CD4-positive, alpha-beta T cell (primary cell): ENCODE measurements at regions of chr21 and their contacts with region 1.

Region 1: GRCh38 chr21:37009740-37010341 is 3.3 kb downstream of the RIPPLY3 start:
- DNase-seq: peak; percentile 62 to 87 (median 74)
- ATAC-seq: peak; percentile 94
- H3K4me3 ChIP-seq: peak overlapping the region; percentile 13
- H3K4me3 Mint-ChIP-seq: peak overlapping the region; percentile 76
- H3K27ac ChIP-seq: no peak overlapping the region
- H3K27ac Mint-ChIP-seq: no peak overlapping the region
- H3K4me1 ChIP-seq: peaks cover 28% of the 10 kb centered on the region
- H3K4me1 Mint-ChIP-seq: peaks cover 15% of the 10 kb centered on the region
- H3K27me3 ChIP-seq: peaks cover 24 to 31% of the 10 kb centered on the region in 2 experiments
- H3K27me3 Mint-ChIP-seq: peaks cover 51% of the 10 kb centered on the region
- CTCF ChIP-seq: peak; percentile 88

Region 2: GRCh38 chr21:35664683-35665082 is 1345.2 kb before region 1 on chr21:
- CTCF ChIA-PET with region 1: no interaction called
- POLR2A ChIA-PET with region 1: no interaction called
- intact Hi-C with region 1: no loop called
- DNase-seq: no peak
- ATAC-seq: no peak
- H3K4me3 ChIP-seq: no peak overlapping the region
- H3K4me3 Mint-ChIP-seq: no peak overlapping the region
- H3K27ac ChIP-seq: no peak overlapping the region
- H3K27ac Mint-ChIP-seq: no peak overlapping the region
- H3K4me1 ChIP-seq: no peaks in the 10 kb centered on the region
- H3K4me1 Mint-ChIP-seq: no peaks in the 10 kb centered on the region
- H3K27me3 ChIP-seq: no peaks in the 10 kb centered on the region
- H3K27me3 Mint-ChIP-seq: peaks cover 5% of the 10 kb centered on the region
- CTCF ChIP-seq: no peak

Region 3: GRCh38 chr21:36504067-36505058 is 505.5 kb before region 1 on chr21:
- CTCF ChIA-PET with region 1: no interaction called
- POLR2A ChIA-PET with region 1: no interaction called
- intact Hi-C with region 1: loop called (anchors 1 to 10 kb)
- DNase-seq: peak in 10 of 14 experiments; percentile 5 to 74 (median 24)
- ATAC-seq: no peak
- H3K4me3 ChIP-seq: no peak overlapping the region
- H3K4me3 Mint-ChIP-seq: no peak overlapping the region
- H3K27ac ChIP-seq: no peak overlapping the region
- H3K27ac Mint-ChIP-seq: no peak overlapping the region
- H3K4me1 ChIP-seq: no peaks in the 10 kb centered on the region
- H3K4me1 Mint-ChIP-seq: no peaks in the 10 kb centered on the region
- H3K27me3 ChIP-seq: no peaks in the 10 kb centered on the region
- H3K27me3 Mint-ChIP-seq: peaks cover 4% of the 10 kb centered on the region
- CTCF ChIP-seq: peak; percentile 99

Region 4: DNA sequence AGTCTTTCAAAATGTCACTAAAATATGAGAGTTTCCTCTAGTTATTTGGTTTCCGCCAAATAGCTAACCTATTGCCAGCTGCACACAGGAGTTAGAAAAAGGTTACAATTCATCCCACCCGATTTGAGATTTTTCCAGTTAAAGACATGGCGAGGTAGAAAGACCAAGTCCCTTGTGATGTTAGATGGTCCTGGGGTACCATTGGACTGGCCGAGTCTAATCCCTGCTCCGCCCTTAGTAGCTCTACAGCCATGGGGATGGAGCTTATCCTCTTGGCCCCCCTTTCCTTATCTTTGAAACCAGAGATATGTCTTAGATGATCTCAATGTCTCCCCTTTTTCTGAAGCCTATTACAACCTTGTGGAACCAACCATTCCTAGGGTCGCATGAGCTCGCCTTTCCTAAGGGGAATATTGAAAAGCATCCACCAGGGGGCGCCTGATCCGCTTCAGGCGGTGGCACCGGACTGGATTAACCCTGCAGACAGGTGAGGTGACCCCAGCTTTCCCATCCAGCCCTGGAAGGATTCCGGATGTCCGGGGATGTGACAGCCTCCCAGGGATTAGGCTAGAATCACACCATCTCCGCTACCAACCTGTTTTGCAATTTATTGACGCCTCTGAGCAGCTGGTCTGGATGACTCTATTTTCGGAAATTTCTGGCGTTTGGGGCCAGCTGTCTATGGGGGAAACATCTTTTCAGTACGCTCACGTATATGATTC is 379.2 kb before region 1 on chr21:
- CTCF ChIA-PET with region 1: no interaction called
- POLR2A ChIA-PET with region 1: no interaction called
- intact Hi-C with region 1: loop called in 1 of 2 experiments (anchors 5 kb)
- DNase-seq: peak; percentile 27 to 73 (median 46)
- ATAC-seq: no peak
- H3K4me3 ChIP-seq: no peak overlapping the region
- H3K4me3 Mint-ChIP-seq: no peak overlapping the region
- H3K27ac ChIP-seq: no peak overlapping the region
- H3K27ac Mint-ChIP-seq: no peak overlapping the region
- H3K4me1 ChIP-seq: no peaks in the 10 kb centered on the region
- H3K4me1 Mint-ChIP-seq: no peaks in the 10 kb centered on the region
- H3K27me3 ChIP-seq: no peaks in the 10 kb centered on the region
- H3K27me3 Mint-ChIP-seq: peaks cover 5% of the 10 kb centered on the region
- CTCF ChIP-seq: peak; percentile 76

Region 5: GRCh38 chr21:36934864-36935420 is 74.9 kb before region 1 on chr21:
- CTCF ChIA-PET with region 1: interaction called, 10 read pairs
- POLR2A ChIA-PET with region 1: no interaction called
- intact Hi-C with region 1: loop called (anchors 1 to 5 kb)
- DNase-seq: no peak
- ATAC-seq: no peak
- H3K4me3 ChIP-seq: no peak overlapping the region
- H3K4me3 Mint-ChIP-seq: no peak overlapping the region
- H3K27ac ChIP-seq: no peak overlapping the region
- H3K27ac Mint-ChIP-seq: no peak overlapping the region
- H3K4me1 ChIP-seq: no peaks in the 10 kb centered on the region
- H3K4me1 Mint-ChIP-seq: no peaks in the 10 kb centered on the region
- H3K27me3 ChIP-seq: no peaks in the 10 kb centered on the region
- H3K27me3 Mint-ChIP-seq: no peaks in the 10 kb centered on the region
- CTCF ChIP-seq: no peak

Region 6: DNA sequence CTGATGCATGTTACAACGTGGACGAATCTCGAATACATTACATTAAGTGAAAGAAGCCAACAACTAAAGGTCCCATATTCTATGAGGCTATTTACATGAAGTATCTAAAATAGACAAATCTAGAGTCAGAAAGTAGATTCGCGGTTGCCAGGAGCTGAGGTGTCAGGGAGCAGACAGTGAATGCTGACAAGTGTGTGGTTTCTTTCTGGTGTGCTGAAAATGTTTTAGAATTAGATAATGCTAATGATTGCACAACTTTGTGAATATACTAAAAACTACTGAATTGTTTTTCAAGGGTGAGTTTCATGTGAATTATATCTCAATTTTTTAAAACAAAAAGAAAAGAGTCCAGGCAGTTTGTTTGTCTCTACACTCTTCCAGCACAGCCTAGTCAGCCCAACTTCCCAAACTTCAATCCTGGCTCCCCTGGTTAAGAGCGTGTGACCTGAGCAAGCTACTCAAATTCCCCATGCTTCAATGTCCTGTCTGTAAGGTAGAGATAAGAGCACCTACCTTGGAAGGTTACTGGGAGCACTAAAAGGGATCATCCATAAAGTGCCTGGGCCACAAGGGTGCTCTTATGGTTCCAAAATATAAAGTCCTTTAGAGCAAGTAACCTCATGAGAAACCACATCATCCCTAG is 64.2 kb before region 1 on chr21:
- CTCF ChIA-PET with region 1: interaction called, 10 read pairs
- POLR2A ChIA-PET with region 1: no interaction called
- intact Hi-C with region 1: no loop called
- DNase-seq: no peak
- ATAC-seq: no peak
- H3K4me3 ChIP-seq: no peak overlapping the region
- H3K4me3 Mint-ChIP-seq: no peak overlapping the region
- H3K27ac ChIP-seq: no peak overlapping the region
- H3K27ac Mint-ChIP-seq: no peak overlapping the region
- H3K4me1 ChIP-seq: no peaks in the 10 kb centered on the region
- H3K4me1 Mint-ChIP-seq: no peaks in the 10 kb centered on the region
- H3K27me3 ChIP-seq: no peaks in the 10 kb centered on the region
- H3K27me3 Mint-ChIP-seq: no peaks in the 10 kb centered on the region
- CTCF ChIP-seq: no peak